ENCODE measurements at regions of chr4 and their contacts with region 1.

Region 1: DNA sequence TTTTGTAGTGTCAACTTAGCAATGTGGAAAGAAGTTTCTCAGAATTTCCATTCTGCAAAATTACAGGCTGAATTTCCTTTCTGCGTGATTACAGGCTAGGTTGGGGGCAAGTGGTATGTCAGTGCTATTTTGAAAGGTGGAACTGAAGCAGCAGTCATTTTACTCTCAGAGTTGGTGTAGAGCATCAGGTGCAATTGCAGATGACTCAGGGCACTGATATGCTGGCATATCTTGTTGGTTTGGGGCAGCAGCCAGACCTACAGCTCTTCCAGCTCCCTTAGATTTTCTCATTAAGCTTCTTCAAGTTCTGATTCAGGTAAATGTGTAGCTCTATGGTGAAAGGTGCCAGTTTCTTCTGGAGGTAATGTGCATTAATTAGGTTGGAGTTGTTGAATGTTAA is 930.7 kb upstream of the PCDH10 start:
- DNase-seq: no peak
- H3K4me3 ChIP-seq: no peak overlapping the region
- CTCF ChIP-seq: no peak
- POLR2A ChIP-seq: no peak

Region 2: DNA sequence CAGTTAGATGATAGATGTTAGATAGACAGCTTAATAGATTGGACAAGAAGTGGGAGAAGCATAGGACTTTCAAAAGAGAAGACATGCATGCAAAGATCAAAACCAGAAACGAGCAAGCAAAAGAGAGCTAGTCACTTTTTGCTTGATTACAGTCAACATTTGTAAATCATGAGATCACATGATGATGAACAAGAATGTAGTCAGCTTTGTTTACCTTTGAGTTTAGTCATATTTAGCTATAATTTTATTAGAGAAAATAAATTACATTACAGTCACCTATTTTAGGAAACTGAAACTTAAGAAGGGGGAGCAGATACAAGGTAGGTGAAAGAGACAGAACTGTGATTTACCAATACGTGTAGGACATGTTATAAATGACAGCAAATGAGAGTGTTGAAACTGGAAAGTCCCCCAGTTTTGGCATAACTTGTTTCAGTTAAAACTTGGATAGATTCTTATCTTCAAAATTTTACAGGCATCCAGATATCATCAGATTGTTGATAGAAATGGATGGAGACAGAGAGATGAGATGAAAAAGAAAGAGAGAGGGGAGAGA is 152.4 kb before region 1 on chr4:
- intact Hi-C with region 1: loop called (anchors 5 kb)
- DNase-seq: no peak
- H3K4me3 ChIP-seq: no peak overlapping the region
- CTCF ChIP-seq: no peak
- POLR2A ChIP-seq: no peak